ENCODE measurements at regions of chr10 and their contacts with region 1.

Region 1: DNA sequence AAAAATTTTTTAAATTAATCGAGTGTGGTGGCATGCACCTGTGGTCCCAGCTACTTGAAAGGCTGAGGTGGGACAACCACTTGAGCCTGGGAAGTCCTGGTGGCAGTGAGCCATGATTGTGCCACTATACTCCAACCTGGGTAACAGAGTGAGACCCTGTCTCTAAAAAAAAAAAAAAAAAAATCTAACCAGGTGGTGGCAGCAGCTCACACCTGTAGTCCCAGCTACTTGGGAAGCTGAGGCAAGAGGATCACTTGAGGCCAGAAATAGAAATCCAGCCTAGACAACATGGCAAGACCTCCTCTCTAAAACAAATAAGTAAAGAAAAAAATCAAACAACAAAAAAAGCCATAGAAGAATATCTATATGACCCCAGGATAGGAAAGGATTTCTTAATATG is 3.6 kb upstream of the MYOF start:
- DNase-seq: no peak
- ATAC-seq: no peak
- H3K4me3 ChIP-seq: no peak overlapping the region
- H3K27ac ChIP-seq: no peak overlapping the region
- H3K4me1 ChIP-seq: peaks cover 2% of the 10 kb centered on the region
- H3K27me3 ChIP-seq: no peaks in the 10 kb centered on the region
- CTCF ChIP-seq: no peak
- POLR2A ChIP-seq: no peak

Region 2: DNA sequence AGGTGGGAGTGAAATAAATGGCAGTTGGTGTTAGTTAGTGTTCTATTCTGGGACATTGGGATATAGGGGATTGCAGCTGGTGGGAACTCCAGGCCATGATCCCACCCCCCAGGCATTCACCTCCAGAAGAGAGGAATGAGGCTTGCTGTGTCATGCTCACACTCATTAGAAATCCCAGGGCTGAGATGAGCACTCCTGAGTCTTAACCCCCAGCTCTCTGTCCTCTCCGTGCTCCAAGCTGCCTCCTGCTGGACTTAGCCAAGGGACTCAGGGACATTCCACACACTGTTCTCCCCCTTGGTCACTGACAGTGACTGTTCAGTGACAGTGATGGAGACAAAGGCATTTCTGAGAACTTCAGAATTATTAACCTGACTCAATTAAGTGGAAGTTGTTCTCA is 390.5 kb before region 1 on chr10:
- intact Hi-C with region 1: no loop called
- DNase-seq: no peak
- ATAC-seq: no peak
- H3K4me3 ChIP-seq: no peak overlapping the region
- H3K27ac ChIP-seq: no peak overlapping the region
- H3K4me1 ChIP-seq: no peaks in the 10 kb centered on the region
- H3K27me3 ChIP-seq: no peaks in the 10 kb centered on the region
- CTCF ChIP-seq: no peak
- POLR2A ChIP-seq: no peak

Region 3: GRCh38 chr10:93319896-93320295 is 165.8 kb before region 1 on chr10:
- intact Hi-C with region 1: no loop called
- DNase-seq: no peak
- ATAC-seq: no peak
- H3K4me3 ChIP-seq: no peak overlapping the region
- H3K27ac ChIP-seq: no peak overlapping the region
- H3K4me1 ChIP-seq: no peaks in the 10 kb centered on the region
- H3K27me3 ChIP-seq: no peaks in the 10 kb centered on the region
- CTCF ChIP-seq: no peak
- POLR2A ChIP-seq: no peak

Region 4: GRCh38 chr10:93379731-93380575 is 105.7 kb before region 1 on chr10:
- intact Hi-C with region 1: loop called (anchors 5 kb)
- DNase-seq: peak in 1 of 4 donors; percentile 4
- ATAC-seq: no peak
- H3K4me3 ChIP-seq: no peak overlapping the region
- H3K27ac ChIP-seq: no peak overlapping the region
- H3K4me1 ChIP-seq: no peaks in the 10 kb centered on the region
- H3K27me3 ChIP-seq: no peaks in the 10 kb centered on the region
- CTCF ChIP-seq: no peak
- POLR2A ChIP-seq: no peak

Measured in body of pancreas (tissue), 4 donors.